ENCODE measurements at regions of chr1 and their contacts with region 1.

Region 1: DNA sequence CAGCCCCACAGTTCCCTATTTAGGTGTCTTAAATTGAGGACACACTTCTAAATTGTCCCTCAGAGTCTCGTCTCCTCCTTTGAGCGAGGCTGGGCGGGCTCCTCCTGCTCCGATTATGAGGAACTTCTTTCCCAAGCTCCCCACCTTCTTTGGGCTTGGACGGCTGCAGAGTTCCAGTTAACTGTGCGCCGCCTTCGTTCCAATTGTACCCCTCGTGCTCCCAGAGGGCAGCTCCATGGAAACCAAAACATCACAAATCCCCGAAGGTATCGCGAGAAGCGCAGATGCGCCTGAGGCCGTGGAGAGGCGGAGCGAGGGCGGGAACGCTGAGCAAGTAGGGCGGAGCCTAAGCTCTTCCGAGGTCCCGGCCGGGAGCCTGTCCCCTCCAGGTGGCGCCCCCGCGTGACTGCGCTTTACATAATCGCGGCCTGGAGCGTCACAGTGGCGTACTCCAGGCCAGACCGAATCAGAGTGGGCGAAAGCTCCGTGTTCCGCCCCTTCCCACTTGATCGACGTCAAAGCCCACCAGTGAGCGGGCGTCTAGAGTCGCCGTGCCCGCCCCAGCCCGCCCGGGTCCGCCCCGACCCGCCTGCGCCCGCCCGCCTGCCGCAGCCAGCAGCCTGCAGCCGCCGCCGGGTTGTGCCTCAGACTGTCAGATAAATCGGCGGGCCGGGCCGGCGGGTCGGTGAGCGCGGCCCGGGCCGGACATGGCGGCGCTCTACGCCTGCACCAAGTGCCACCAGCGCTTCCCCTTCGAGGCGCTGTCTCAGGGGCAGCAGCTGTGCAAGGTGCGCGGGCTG is at the start of gene FAM76A:
- DNase-seq: peak; percentile 98
- ATAC-seq: peak; percentile 93
- H3K4me3 Mint-ChIP-seq: peak within 1 kb of the TSS; percentile 88
- H3K27ac Mint-ChIP-seq: peak within 1 kb of the TSS; percentile 97
- H3K4me1 Mint-ChIP-seq: peaks cover 26% of the 10 kb centered on the region
- H3K27me3 Mint-ChIP-seq: no peaks in the 10 kb centered on the region
- CTCF ChIP-seq: no peak
- total RNA-seq, gene FAM76A: 14.9 and 19.3 TPM in 2 replicates

Region 2: DNA sequence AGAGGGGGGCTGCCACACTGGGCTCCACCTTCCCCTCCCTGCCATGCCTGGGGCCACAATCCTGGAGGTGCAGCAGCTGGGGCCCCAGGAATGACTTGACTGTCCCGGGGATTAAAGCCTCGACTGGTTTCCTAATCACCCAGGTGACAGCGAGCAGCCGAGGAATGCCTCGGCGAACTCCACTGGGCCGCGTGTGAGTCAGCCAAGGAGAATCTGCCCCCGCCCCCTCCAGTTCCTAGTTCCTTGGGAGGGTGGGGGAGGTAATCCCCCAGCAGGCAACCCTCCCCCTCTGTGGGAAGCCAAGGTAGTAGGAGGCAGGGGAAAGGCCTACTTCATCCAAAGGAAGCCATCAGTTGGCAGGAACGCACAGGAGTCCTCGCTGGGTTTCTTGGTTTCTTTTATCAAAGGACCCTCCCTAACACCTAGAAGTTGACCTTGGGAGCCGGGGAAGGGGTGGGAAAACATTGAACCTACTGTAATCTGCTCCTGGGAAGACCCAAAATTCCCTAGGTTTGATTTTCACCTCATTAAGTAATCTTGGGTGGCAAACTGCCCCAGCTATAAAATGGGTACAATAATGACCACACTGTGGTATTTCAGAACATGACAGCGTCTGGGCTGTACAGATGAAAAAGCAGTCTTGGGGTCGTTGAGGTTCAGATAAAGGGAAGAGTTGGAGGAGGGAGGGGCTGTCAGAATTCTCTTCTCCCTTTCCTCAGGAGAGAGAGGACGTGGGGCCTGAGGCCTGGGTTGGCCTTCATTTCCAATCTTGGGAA is 714.4 kb before region 1 on chr1:
- CTCF ChIA-PET with region 1: no interaction called
- POLR2A ChIA-PET with region 1: no interaction called
- intact Hi-C with region 1: loop called (anchors 5 kb)
- DNase-seq: no peak
- ATAC-seq: no peak
- H3K4me3 Mint-ChIP-seq: no peak overlapping the region
- H3K27ac Mint-ChIP-seq: no peak overlapping the region
- H3K4me1 Mint-ChIP-seq: peaks cover 17% of the 10 kb centered on the region
- H3K27me3 Mint-ChIP-seq: peaks cover 9% of the 10 kb centered on the region
- CTCF ChIP-seq: no peak

Region 3: GRCh38 chr1:27179379-27179778 is 546.2 kb before region 1 on chr1:
- CTCF ChIA-PET with region 1: no interaction called
- POLR2A ChIA-PET with region 1: no interaction called
- intact Hi-C with region 1: no loop called
- DNase-seq: no peak
- ATAC-seq: no peak
- H3K4me3 Mint-ChIP-seq: no peak overlapping the region
- H3K27ac Mint-ChIP-seq: no peak overlapping the region
- H3K4me1 Mint-ChIP-seq: no peaks in the 10 kb centered on the region
- H3K27me3 Mint-ChIP-seq: no peaks in the 10 kb centered on the region
- CTCF ChIP-seq: no peak

Region 4: GRCh38 chr1:27341525-27342252 is 383.9 kb before region 1 on chr1 and contains the start of gene SYTL1:
- CTCF ChIA-PET with region 1: no interaction called
- POLR2A ChIA-PET with region 1: interaction called, 4 read pairs
- intact Hi-C with region 1: loop called (anchors 5 kb)
- DNase-seq: peak; percentile 72
- ATAC-seq: peak; percentile 76
- H3K4me3 Mint-ChIP-seq: peak within 1 kb of the TSS; percentile 80
- H3K27ac Mint-ChIP-seq: peak within 1 kb of the TSS; percentile 87
- H3K4me1 Mint-ChIP-seq: peaks cover 67% of the 10 kb centered on the region
- H3K27me3 Mint-ChIP-seq: no peaks in the 10 kb centered on the region
- CTCF ChIP-seq: no peak
- total RNA-seq, gene SYTL1: 76.0 and 81.9 TPM in 2 replicates

Region 5: GRCh38 chr1:27609210-27609555 is 116.4 kb before region 1 on chr1:
- CTCF ChIA-PET with region 1: interaction called, 3 read pairs
- POLR2A ChIA-PET with region 1: no interaction called
- intact Hi-C with region 1: loop called (anchors 2 kb)
- DNase-seq: no peak
- ATAC-seq: peak; percentile 18
- H3K4me3 Mint-ChIP-seq: no peak overlapping the region
- H3K27ac Mint-ChIP-seq: no peak overlapping the region
- H3K4me1 Mint-ChIP-seq: peaks cover 15% of the 10 kb centered on the region
- H3K27me3 Mint-ChIP-seq: no peaks in the 10 kb centered on the region
- CTCF ChIP-seq: no peak

Region 6: DNA sequence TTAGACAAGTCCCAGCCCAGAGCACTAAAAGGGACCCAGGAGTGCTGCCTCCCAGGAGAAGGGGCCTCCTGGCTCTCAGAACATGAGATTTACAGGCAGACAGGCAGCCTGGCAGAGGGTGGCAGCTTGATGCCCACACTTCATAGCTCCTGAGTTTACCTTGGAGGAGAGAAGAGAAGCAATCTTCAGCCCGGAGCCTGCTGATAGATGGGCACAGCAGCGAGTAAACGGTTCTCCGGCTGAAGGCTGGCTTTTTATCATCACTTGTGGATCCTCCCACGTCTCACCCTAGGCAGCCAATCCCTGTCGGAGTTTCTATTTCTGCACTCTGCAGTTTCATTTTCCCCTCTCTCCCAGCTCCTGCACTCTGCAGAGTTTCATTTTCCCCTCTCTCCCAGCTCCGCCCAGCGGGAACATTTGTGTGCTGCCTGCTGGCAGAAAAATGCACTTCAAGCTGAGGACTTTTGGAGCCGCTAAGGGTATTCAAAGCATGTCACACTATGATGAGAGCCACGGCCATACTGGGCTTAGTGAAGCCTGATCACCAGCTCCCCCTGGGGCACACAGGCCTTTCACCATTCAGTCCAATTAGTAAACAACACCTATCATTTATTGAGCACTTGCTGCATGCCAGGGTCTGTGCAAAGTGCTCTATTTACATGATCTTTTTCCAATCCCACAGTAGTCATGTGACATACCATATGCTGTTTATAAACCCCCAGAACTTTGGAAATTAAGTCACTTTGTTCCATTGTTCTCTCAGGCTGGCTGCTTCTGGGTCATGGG is 53.4 kb before region 1 on chr1 and contains the start of gene IFI6:
- CTCF ChIA-PET with region 1: interaction called, 17 read pairs
- POLR2A ChIA-PET with region 1: interaction called, 26 read pairs
- intact Hi-C with region 1: loop called (anchors 1 kb)
- DNase-seq: peak; percentile 63
- ATAC-seq: peak; percentile 90
- H3K4me3 Mint-ChIP-seq: peak within 1 kb of the TSS; percentile 97
- H3K27ac Mint-ChIP-seq: peak within 1 kb of the TSS; percentile 98
- H3K4me1 Mint-ChIP-seq: peaks cover 31% of the 10 kb centered on the region
- H3K27me3 Mint-ChIP-seq: no peaks in the 10 kb centered on the region
- CTCF ChIP-seq: no peak
- total RNA-seq, gene IFI6: 10.9 and 11.4 TPM in 2 replicates

Region 7: DNA sequence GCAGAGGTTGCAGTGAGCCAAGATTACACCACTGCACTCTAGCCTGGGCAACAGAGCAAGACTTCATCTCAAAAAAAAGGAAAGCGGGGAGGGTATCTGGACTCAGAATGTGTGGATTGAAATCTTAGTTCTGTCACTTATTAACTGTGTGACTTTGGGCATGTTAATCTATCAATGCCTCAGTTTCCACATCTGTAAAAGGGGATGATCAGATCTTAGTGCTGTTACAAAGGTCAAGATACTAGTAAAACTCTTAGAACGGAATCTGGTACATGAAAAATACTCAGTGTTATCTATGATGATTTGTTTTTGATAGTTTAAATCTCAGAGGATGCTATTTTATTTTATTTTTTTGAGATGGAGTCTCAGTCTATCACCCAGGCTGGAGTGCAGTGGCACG is 10.7 kb after region 1 on chr1:
- CTCF ChIA-PET with region 1: no interaction called
- POLR2A ChIA-PET with region 1: no interaction called
- intact Hi-C with region 1: no loop called
- DNase-seq: no peak
- ATAC-seq: no peak
- H3K4me3 Mint-ChIP-seq: no peak overlapping the region
- H3K27ac Mint-ChIP-seq: no peak overlapping the region
- H3K4me1 Mint-ChIP-seq: no peaks in the 10 kb centered on the region
- H3K27me3 Mint-ChIP-seq: no peaks in the 10 kb centered on the region
- CTCF ChIP-seq: no peak

Region 8: GRCh38 chr1:27830621-27831424 is 105.2 kb after region 1 on chr1 and contains the start of gene PPP1R8:
- CTCF ChIA-PET with region 1: no interaction called
- POLR2A ChIA-PET with region 1: interaction called, 21 read pairs
- intact Hi-C with region 1: loop called (anchors 1 kb)
- DNase-seq: peak; percentile 84
- ATAC-seq: peak; percentile 98
- H3K4me3 Mint-ChIP-seq: peak within 1 kb of the TSS; percentile 95
- H3K27ac Mint-ChIP-seq: peak within 1 kb of the TSS; percentile 89
- H3K4me1 Mint-ChIP-seq: peaks cover 22% of the 10 kb centered on the region
- H3K27me3 Mint-ChIP-seq: no peaks in the 10 kb centered on the region
- CTCF ChIP-seq: no peak
- total RNA-seq, gene PPP1R8: 48.3 and 52.0 TPM in 2 replicates

Region 9: GRCh38 chr1:27959400-27960217 is 234.0 kb after region 1 on chr1 and contains the start of gene XKR8:
- CTCF ChIA-PET with region 1: no interaction called
- POLR2A ChIA-PET with region 1: no interaction called
- intact Hi-C with region 1: loop called (anchors 5 kb)
- DNase-seq: peak; percentile 86
- ATAC-seq: peak; percentile 99
- H3K4me3 Mint-ChIP-seq: peak within 1 kb of the TSS; percentile 89
- H3K27ac Mint-ChIP-seq: peak within 1 kb of the TSS; percentile 83
- H3K4me1 Mint-ChIP-seq: peaks cover 20% of the 10 kb centered on the region
- H3K27me3 Mint-ChIP-seq: no peaks in the 10 kb centered on the region
- CTCF ChIP-seq: no peak
- total RNA-seq, gene XKR8: 5.1 and 6.1 TPM in 2 replicates

Region 10: DNA sequence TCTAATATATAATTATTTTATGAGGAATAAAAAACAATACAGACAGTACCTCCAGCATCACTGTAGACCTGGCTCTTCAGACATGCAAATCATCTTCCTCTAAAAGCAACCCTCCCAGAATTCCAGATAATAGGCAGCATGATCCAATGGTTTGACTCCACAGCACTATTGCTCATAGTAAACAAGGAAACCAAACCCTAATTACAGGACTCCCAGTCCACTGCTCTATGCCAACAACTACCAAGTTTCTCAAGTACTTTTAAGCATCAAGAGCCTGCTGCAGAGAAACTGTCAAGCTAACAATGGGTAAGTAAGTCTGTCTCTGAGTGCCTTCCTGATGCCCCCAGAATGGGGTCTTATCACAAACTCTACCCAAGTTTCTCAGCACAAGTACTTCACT is 305.6 kb after region 1 on chr1:
- CTCF ChIA-PET with region 1: no interaction called
- POLR2A ChIA-PET with region 1: no interaction called
- intact Hi-C with region 1: no loop called
- DNase-seq: no peak
- ATAC-seq: no peak
- H3K4me3 Mint-ChIP-seq: no peak overlapping the region
- H3K27ac Mint-ChIP-seq: no peak overlapping the region
- H3K4me1 Mint-ChIP-seq: peaks cover 6% of the 10 kb centered on the region
- H3K27me3 Mint-ChIP-seq: no peaks in the 10 kb centered on the region
- CTCF ChIP-seq: no peak

Region 11: GRCh38 chr1:28056129-28056925 is 330.8 kb after region 1 on chr1:
- CTCF ChIA-PET with region 1: no interaction called
- POLR2A ChIA-PET with region 1: no interaction called
- intact Hi-C with region 1: no loop called
- DNase-seq: no peak
- ATAC-seq: peak; percentile 95
- H3K4me3 Mint-ChIP-seq: peak overlapping the region; percentile 12
- H3K27ac Mint-ChIP-seq: peak overlapping the region; percentile 84
- H3K4me1 Mint-ChIP-seq: peaks cover 32% of the 10 kb centered on the region
- H3K27me3 Mint-ChIP-seq: no peaks in the 10 kb centered on the region
- CTCF ChIP-seq: no peak